Stomach (tissue), 19 donors: ENCODE measurements at regions of chr1 and their contacts with region 1.

Region 1: GRCh38 chr1:31182352-31182751 is 57.3 kb downstream of the NKAIN1 start:
- DNase-seq: peak; percentile 56 to 95
- H3K4me3 ChIP-seq: peak overlapping the region; percentile 0 to 35 (median 17)
- H3K27ac ChIP-seq: no peak overlapping the region
- H3K4me1 ChIP-seq: peaks cover 8 to 17% (median 14%) of the 10 kb centered on the region in 4 donors
- H3K27me3 ChIP-seq: peaks cover 0 to 50% (median 25%) of the 10 kb centered on the region in 3 donors
- CTCF ChIP-seq: no peak
- EP300 ChIP-seq: no peak
- POLR2A ChIP-seq: no peak

Region 2: GRCh38 chr1:30982937-30983336 is 199.4 kb before region 1 on chr1:
- intact Hi-C with region 1: no loop called
- DNase-seq: no peak
- H3K4me3 ChIP-seq: no peak overlapping the region
- H3K27ac ChIP-seq: peak overlapping the region in 2 of 5 donors; percentile 12 to 42
- H3K4me1 ChIP-seq: peaks cover 20 to 79% (median 42%) of the 10 kb centered on the region in 4 donors
- H3K27me3 ChIP-seq: no peaks in the 10 kb centered on the region
- CTCF ChIP-seq: no peak
- EP300 ChIP-seq: no peak
- POLR2A ChIP-seq: no peak

Region 3: DNA sequence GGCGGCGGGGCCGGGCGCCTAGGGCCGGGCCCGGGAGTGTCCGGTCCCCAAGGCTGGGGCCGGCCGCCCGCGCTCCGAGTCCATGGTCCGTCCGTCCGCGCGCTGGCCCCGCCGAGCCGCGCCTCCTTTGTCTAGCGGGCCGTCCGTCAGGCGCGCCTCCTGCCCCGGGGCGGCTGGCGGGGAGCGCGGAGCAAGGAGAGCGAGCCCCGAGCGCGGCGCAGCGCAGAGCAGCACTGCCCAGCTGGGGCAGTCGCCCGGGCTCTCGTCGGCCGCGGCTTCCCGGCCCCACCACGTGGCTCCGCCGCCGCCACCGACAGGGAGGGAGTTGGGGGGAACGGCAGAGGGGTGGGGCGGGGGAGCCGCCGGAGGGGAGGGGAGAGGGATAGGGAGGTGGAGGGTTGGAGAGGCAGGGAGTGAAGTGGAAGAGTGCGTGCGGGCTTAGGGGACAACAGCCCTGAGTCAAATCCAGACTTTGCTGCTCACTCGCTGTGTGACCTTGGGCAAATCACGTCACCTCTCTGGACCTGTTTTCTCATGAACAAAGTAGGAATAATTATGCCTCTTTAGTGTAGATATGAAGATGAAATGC is 57.4 kb after region 1 on chr1 and contains the start of gene NKAIN1:
- intact Hi-C with region 1: no loop called
- DNase-seq: peak in 1 of 2 donors; percentile 72
- H3K4me3 ChIP-seq: peak within 1 kb of the TSS; percentile 31 to 49 (median 38)
- H3K27ac ChIP-seq: no peak within 1 kb of the TSS
- H3K4me1 ChIP-seq: peaks cover 12 to 16% (median 15%) of the 10 kb centered on the region in 4 donors
- H3K27me3 ChIP-seq: peaks cover 6 to 74% (median 62%) of the 10 kb centered on the region in 3 donors
- CTCF ChIP-seq: no peak
- EP300 ChIP-seq: no peak
- POLR2A ChIP-seq: no peak
- total RNA-seq, gene NKAIN1: not detected

Region 4: GRCh38 chr1:31422505-31423319 is 240.4 kb after region 1 on chr1:
- intact Hi-C with region 1: loop called (anchors 10 kb)
- DNase-seq: peak; percentile 80 to 92
- H3K4me3 ChIP-seq: no peak overlapping the region
- H3K27ac ChIP-seq: peak overlapping the region in 4 of 5 donors; percentile 36 to 61 (median 44)
- H3K4me1 ChIP-seq: peaks cover 0 to 36% (median 7%) of the 10 kb centered on the region in 4 donors
- H3K27me3 ChIP-seq: peaks cover 0 to 6% (median 0%) of the 10 kb centered on the region in 3 donors
- CTCF ChIP-seq: peak in 5 of 7 experiments; percentile 74 to 97 (median 93)
- EP300 ChIP-seq: no peak
- POLR2A ChIP-seq: no peak